ENCODE measurements at regions of chr19 and their contacts with region 1.

Region 1: DNA sequence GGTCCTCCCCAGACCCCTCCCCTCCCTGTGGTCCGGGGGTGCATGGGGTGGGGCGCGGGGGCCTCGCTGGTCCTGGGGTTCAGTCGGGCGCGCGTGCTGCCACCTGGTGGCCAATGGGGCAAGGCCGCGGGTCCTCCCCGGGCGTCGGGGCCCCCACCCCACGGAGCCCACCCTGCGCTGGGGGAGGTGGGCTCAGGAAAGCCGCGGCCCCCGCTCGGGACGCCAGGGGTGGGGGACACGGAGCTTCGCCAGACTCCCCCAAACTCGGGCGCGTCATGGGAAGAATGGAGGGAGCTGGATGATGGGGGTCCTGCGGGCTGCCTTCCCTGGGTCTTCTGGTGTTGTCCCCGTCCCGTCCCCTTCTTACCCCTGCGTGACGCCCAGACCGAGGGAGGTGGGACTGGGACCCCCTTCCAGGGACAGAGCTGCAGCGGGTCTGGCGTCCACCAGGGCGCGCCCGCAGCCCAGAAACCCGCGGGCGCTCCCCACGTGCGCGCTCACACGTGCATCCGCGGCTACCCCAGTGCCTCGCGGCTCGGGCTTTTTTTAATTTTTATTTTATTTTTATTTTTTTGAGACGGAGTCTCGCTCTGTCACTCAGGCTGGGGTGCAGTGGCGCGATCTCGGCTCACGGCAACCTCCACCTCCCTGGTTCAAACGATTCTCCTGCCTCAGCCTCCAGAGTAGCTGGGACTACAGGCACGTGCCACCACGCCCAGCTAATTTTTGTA is 19.8 kb upstream of the TCF3 start:
- DNase-seq: peak in 3 of 6 donors; percentile 32 to 82 (median 54)
- ATAC-seq: peak; percentile 27 to 76 (median 68)
- H3K4me3 ChIP-seq: peak overlapping the region in 1 of 4 donors; percentile 28
- H3K27ac ChIP-seq: no peak overlapping the region
- H3K4me1 ChIP-seq: peaks cover 0 to 18% (median 10%) of the 10 kb centered on the region in 3 donors
- H3K27me3 ChIP-seq: peaks cover 0 to 11% (median 5%) of the 10 kb centered on the region in 4 donors
- CTCF ChIP-seq: peak; percentile 64 to 82 (median 66)

Region 2: DNA sequence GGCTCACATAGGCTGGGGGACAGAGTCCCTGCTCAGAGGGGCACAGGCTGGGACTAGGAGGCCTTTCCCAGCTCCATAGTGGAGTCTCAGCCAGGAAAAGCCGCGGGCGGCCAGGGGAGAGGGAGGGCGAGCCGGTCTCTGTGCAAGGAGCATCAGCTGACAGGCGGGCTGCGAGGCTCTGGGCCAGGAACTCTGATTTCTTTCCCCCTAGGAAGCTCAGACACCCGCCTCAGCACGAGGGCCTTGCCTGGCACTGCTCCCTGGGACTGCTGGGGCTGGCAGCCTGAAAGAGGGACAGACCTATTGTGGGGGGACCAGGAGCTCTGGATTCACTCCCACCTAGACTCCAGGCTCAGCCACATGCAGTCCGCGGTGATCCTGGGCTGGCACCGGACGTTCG is 150.6 kb before region 1 on chr19:
- intact Hi-C with region 1: no loop called
- DNase-seq: no peak
- ATAC-seq: no peak
- H3K4me3 ChIP-seq: no peak overlapping the region
- H3K27ac ChIP-seq: no peak overlapping the region
- H3K4me1 ChIP-seq: no peaks in the 10 kb centered on the region
- H3K27me3 ChIP-seq: peaks cover 0 to 10% (median 2%) of the 10 kb centered on the region in 4 donors
- CTCF ChIP-seq: no peak

Region 3: DNA sequence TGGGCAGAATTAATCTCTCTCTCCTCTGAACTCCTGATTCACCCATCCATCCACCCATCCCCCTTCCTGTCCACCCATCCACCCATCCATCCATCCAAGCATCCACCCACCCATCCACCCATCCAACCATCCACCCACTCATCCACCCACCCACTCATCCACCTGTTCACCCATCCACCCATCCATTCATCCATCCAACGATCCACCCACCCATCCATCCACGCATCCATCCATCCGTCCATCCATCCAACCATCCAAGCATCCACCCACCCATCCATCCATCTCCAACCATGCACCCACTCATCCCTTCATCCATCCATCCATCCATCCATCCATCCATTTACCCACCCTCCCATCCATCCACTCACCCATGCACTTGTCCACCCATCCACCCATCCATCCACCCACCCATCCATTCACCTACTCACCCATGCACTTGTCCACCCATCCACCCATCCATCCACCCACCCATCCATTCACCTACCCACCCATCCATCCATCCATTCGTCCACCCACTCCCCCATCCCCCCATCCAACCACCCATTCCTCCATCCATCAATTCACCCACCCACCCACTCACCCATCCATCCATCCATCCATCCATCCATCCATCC is 122.8 kb before region 1 on chr19:
- intact Hi-C with region 1: loop called in 2 of 3 experiments (anchors 5 to 10 kb)
- DNase-seq: no peak
- ATAC-seq: no peak
- H3K4me3 ChIP-seq: no peak overlapping the region
- H3K27ac ChIP-seq: no peak overlapping the region
- H3K4me1 ChIP-seq: no peaks in the 10 kb centered on the region
- H3K27me3 ChIP-seq: no peaks in the 10 kb centered on the region
- CTCF ChIP-seq: no peak

Region 4: GRCh38 chr19:1555487-1556389 is 116.5 kb before region 1 on chr19:
- intact Hi-C with region 1: loop called in 1 of 3 experiments (anchors 10 kb)
- DNase-seq: peak in 1 of 6 donors; percentile 57
- ATAC-seq: no peak
- H3K4me3 ChIP-seq: no peak overlapping the region
- H3K27ac ChIP-seq: no peak overlapping the region
- H3K4me1 ChIP-seq: no peaks in the 10 kb centered on the region
- H3K27me3 ChIP-seq: no peaks in the 10 kb centered on the region
- CTCF ChIP-seq: no peak

Region 5: DNA sequence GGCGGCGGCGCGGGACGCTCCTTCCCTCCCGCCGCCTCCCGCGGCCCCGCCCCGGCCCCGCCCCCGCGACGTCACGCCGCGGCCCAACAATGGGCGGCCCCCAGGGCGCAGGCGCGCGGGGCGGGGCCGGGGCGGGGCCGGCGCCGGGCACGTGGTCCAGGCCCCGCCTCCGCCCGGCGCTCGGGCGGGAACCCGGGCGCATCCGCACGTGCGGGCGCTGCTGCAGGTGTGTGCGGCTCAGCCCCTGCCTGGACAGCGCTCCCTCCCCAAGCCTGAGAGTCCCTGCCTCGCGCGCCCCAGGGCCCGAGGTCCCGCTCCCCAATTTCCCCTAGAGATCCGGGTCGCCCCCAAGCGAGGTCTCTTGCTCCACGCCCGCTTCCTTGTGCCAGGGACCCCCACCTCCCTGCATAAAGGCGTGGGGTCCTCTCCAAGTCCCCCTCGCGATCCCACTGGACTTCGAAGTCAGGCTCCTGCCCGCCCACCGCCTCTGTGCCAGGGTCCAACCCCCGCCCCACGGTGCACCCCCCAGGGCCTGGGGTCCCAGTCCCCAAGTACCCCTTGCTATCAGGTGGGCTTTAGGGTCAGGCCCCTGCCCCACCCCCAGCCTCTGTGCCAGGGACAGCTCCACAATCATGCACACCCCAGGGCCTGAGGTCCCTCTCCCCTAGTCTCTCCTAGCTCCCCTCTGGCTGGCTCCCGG is 103.7 kb before region 1 on chr19 and contains the start of gene MEX3D:
- intact Hi-C with region 1: no loop called
- DNase-seq: peak; percentile 57 to 94 (median 84)
- ATAC-seq: peak; percentile 86 to 90 (median 88)
- H3K4me3 ChIP-seq: peak within 1 kb of the TSS; percentile 40 to 67 (median 66)
- H3K27ac ChIP-seq: peak within 1 kb of the TSS; percentile 43 to 83 (median 74)
- H3K4me1 ChIP-seq: peaks cover 0 to 4% (median 4%) of the 10 kb centered on the region in 3 donors
- H3K27me3 ChIP-seq: no peaks in the 10 kb centered on the region
- CTCF ChIP-seq: no peak
- total RNA-seq, gene MEX3D: 8.1 to 21.2 (median 10.3) TPM

Region 6: GRCh38 chr19:1592755-1593500 is 79.3 kb before region 1 on chr19 and contains the start of gene MBD3:
- intact Hi-C with region 1: no loop called
- DNase-seq: peak; percentile 90 to 99 (median 95)
- ATAC-seq: peak; percentile 90 to 96 (median 92)
- H3K4me3 ChIP-seq: peak within 1 kb of the TSS; percentile 62 to 85 (median 66)
- H3K27ac ChIP-seq: peak within 1 kb of the TSS; percentile 78 to 93 (median 88)
- H3K4me1 ChIP-seq: peaks cover 0 to 13% (median 0%) of the 10 kb centered on the region in 3 donors
- H3K27me3 ChIP-seq: no peaks in the 10 kb centered on the region
- CTCF ChIP-seq: peak in 1 of 4 donors; percentile 12
- total RNA-seq, gene MBD3: 17.4 to 38.2 (median 26.4) TPM

Region 7: GRCh38 chr19:1767464-1767933 is 95.3 kb after region 1 on chr19:
- intact Hi-C with region 1: loop called in 2 of 3 experiments (anchors 2 to 5 kb)
- DNase-seq: peak in 5 of 6 donors; percentile 17 to 88 (median 58)
- ATAC-seq: peak; percentile 58 to 93 (median 84)
- H3K4me3 ChIP-seq: no peak overlapping the region
- H3K27ac ChIP-seq: no peak overlapping the region
- H3K4me1 ChIP-seq: no peaks in the 10 kb centered on the region
- H3K27me3 ChIP-seq: peaks cover 0 to 29% (median under 1%) of the 10 kb centered on the region in 4 donors
- CTCF ChIP-seq: peak; percentile 80 to 94 (median 84)

Region 8: GRCh38 chr19:1780272-1780958 is 108.2 kb after region 1 on chr19:
- intact Hi-C with region 1: no loop called
- DNase-seq: no peak
- ATAC-seq: no peak
- H3K4me3 ChIP-seq: no peak overlapping the region
- H3K27ac ChIP-seq: no peak overlapping the region
- H3K4me1 ChIP-seq: no peaks in the 10 kb centered on the region
- H3K27me3 ChIP-seq: peaks cover 0 to 24% (median 0%) of the 10 kb centered on the region in 4 donors
- CTCF ChIP-seq: no peak

Measured in pancreas (tissue), 10 donors.